ENCODE measurements at regions of chr9 and their contacts with region 1.

Region 1: DNA sequence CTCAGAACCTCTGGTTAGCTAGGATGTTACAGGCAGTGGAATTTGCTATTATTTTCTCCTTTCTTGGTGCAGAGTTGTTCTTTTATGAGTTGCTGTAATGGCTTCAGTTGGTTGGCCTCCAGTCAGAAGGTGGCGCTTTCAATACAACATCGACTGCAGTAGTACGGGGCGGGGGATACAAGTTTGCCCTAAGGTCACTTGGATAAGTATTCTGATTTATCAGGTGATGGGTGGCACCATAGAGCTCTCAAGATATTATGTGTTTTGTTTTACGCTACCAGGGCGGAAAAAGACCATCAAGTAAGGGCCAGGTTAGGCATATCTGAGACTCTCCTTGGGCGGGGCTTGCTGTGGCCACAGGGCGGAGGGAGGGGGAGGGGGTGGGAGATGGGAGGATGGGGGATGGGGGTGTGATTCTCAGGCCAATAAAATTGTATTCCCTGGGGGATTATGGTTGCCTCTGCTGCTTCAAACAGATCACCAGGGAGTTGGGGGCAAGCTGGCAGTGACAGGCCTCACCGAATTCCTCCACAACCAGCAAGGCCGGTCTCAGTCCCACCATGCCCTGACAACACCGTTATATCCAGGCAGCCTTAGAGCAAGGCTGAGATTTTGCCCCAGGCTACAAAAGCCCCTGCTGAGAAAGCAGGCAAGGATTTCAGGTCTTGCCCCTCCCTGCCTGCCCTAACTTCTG is 15.9 kb upstream of the RNF38 start:
- DNase-seq: no peak
- ATAC-seq: no peak
- H3K4me3 ChIP-seq: no peak overlapping the region
- H3K27ac ChIP-seq: no peak overlapping the region
- H3K4me1 ChIP-seq: peaks cover 0 to 13% (median 6%) of the 10 kb centered on the region in 3 donors
- H3K27me3 ChIP-seq: no peaks in the 10 kb centered on the region
- CTCF ChIP-seq: no peak

Region 2: DNA sequence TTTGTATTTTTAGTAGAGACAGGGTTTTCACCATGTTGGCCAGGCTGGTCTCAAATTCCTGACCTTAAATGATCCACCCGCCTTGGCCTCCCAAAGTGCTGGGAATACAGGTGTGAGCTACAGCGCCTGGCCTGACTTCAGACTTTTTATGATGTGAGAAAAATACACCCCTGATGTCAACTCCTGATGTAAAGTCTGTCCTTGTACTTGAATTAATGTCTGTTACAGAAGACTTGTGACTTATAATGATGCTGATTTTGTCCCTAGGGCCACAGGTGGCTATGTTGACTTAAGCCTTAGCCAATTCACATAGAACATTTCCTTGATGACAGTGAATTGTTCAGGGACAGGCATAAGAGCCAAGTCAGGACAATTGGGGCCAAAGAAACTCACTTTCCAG is 114.3 kb after region 1 on chr9:
- intact Hi-C with region 1: no loop called
- DNase-seq: peak in 4 of 6 donors; percentile 57 to 76 (median 68)
- ATAC-seq: peak; percentile 90 to 96 (median 94)
- H3K4me3 ChIP-seq: no peak overlapping the region
- H3K27ac ChIP-seq: peak overlapping the region; percentile 41 to 71 (median 42)
- H3K4me1 ChIP-seq: peaks cover 3 to 8% (median 8%) of the 10 kb centered on the region in 3 donors
- H3K27me3 ChIP-seq: no peaks in the 10 kb centered on the region
- CTCF ChIP-seq: no peak

Region 3: GRCh38 chr9:36543916-36544315 is 127.9 kb after region 1 on chr9:
- intact Hi-C with region 1: loop called in 1 of 3 experiments (anchors 10 kb)
- DNase-seq: no peak
- ATAC-seq: no peak
- H3K4me3 ChIP-seq: no peak overlapping the region
- H3K27ac ChIP-seq: no peak overlapping the region
- H3K4me1 ChIP-seq: no peaks in the 10 kb centered on the region
- H3K27me3 ChIP-seq: no peaks in the 10 kb centered on the region
- CTCF ChIP-seq: no peak

Measured in pancreas (tissue), 10 donors.